PC-3 (cell line): ENCODE measurements at regions of chr12 and their contacts with region 1.

Region 1: GRCh38 chr12:92136965-92137721 is 8.5 kb downstream of the BTG1 start:
- DNase-seq: peak; percentile 91
- ATAC-seq: peak; percentile 60
- H3K4me3 ChIP-seq: peak overlapping the region; percentile 87
- H3K27ac ChIP-seq: peak overlapping the region; percentile 91
- H3K4me1 ChIP-seq: peaks cover 69% of the 10 kb centered on the region
- H3K27me3 ChIP-seq: no peaks in the 10 kb centered on the region
- CTCF ChIP-seq: no peak

Region 2: GRCh38 chr12:91561958-91562875 is 574.9 kb before region 1 on chr12:
- CTCF ChIA-PET with region 1: no interaction called
- POLR2A ChIA-PET with region 1: no interaction called
- intact Hi-C with region 1: no loop called
- DNase-seq: no peak
- ATAC-seq: no peak
- H3K4me3 ChIP-seq: no peak overlapping the region
- H3K27ac ChIP-seq: no peak overlapping the region
- H3K4me1 ChIP-seq: no peaks in the 10 kb centered on the region; the same call in 1 of the 2 replicates
- H3K27me3 ChIP-seq: no peaks in the 10 kb centered on the region
- CTCF ChIP-seq: no peak

Region 3: GRCh38 chr12:91778938-91779400 is 358.2 kb before region 1 on chr12:
- CTCF ChIA-PET with region 1: no interaction called
- POLR2A ChIA-PET with region 1: no interaction called
- intact Hi-C with region 1: loop called (anchors 2 kb)
- DNase-seq: peak; percentile 97
- ATAC-seq: peak; percentile 87
- H3K4me3 ChIP-seq: peak overlapping the region; percentile 38
- H3K27ac ChIP-seq: peak overlapping the region; percentile 99
- H3K4me1 ChIP-seq: peaks cover 47% of the 10 kb centered on the region
- H3K27me3 ChIP-seq: no peaks in the 10 kb centered on the region
- CTCF ChIP-seq: no peak

Region 4: GRCh38 chr12:91811481-91812287 is 325.5 kb before region 1 on chr12:
- CTCF ChIA-PET with region 1: interaction called, 3 read pairs
- POLR2A ChIA-PET with region 1: no interaction called
- intact Hi-C with region 1: loop called (anchors 2 kb)
- DNase-seq: peak; percentile 72
- ATAC-seq: peak; percentile 53
- H3K4me3 ChIP-seq: no peak overlapping the region
- H3K27ac ChIP-seq: no peak overlapping the region
- H3K4me1 ChIP-seq: no peaks in the 10 kb centered on the region
- H3K27me3 ChIP-seq: no peaks in the 10 kb centered on the region
- CTCF ChIP-seq: peak; percentile 93

Region 5: DNA sequence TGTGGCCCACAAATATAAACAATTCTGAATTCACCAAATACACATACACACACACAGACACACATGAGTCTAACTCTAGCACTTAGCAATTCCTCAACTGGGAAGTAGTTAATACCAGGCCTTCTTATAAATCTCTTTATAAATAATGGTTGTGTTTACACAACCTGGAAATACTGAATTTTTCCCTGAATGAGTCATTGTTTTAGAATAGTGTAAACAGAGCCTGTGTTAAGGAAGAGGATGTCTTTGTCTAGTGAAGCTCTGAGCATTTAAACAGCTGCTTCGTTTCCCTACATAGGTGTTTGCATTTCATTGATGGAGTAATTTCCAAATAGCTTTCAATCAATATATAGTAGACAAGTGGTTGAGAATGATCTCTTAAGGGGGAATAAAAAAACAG is 210.3 kb before region 1 on chr12:
- CTCF ChIA-PET with region 1: no interaction called
- POLR2A ChIA-PET with region 1: no interaction called
- intact Hi-C with region 1: loop called (anchors 1 kb)
- DNase-seq: peak; percentile 94
- ATAC-seq: peak; percentile 96
- H3K4me3 ChIP-seq: no peak overlapping the region
- H3K27ac ChIP-seq: peak overlapping the region; percentile 36; the same call in 1 of the 2 replicates
- H3K4me1 ChIP-seq: peaks cover 24% of the 10 kb centered on the region
- H3K27me3 ChIP-seq: no peaks in the 10 kb centered on the region
- CTCF ChIP-seq: no peak

Region 6: DNA sequence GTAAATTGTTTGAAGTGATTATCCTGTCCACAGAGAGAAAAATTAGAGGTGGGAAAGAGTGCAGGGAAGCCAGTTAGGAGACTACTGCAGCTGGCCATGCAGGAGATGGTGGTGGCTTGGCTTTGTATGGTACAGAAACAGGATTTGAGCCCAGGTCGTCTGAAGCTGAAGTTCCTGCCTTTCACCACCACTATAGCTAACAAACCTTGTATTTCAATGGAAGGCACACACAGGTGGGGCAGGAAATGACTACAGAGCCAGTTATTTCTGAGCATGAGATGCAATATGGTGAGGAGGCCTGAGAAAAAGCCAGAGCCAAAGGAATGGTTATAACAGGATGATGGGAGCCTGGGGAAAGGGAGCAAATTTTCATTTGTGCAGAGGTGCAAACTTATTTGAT is 95.4 kb before region 1 on chr12:
- CTCF ChIA-PET with region 1: no interaction called
- POLR2A ChIA-PET with region 1: no interaction called
- intact Hi-C with region 1: loop called (anchors 5 kb)
- DNase-seq: peak; percentile 79
- ATAC-seq: peak; percentile 93
- H3K4me3 ChIP-seq: no peak overlapping the region
- H3K27ac ChIP-seq: peak overlapping the region; percentile 41
- H3K4me1 ChIP-seq: peaks cover 23% of the 10 kb centered on the region
- H3K27me3 ChIP-seq: no peaks in the 10 kb centered on the region
- CTCF ChIP-seq: no peak

Region 7: GRCh38 chr12:92085040-92085735 is 52.0 kb before region 1 on chr12:
- CTCF ChIA-PET with region 1: no interaction called
- POLR2A ChIA-PET with region 1: interaction called, 3 read pairs
- intact Hi-C with region 1: loop called (anchors 1 kb)
- DNase-seq: no peak
- ATAC-seq: peak; percentile 7; the same call in 1 of the 2 replicates
- H3K4me3 ChIP-seq: no peak overlapping the region
- H3K27ac ChIP-seq: peak overlapping the region; percentile 61
- H3K4me1 ChIP-seq: peaks cover 44% of the 10 kb centered on the region
- H3K27me3 ChIP-seq: no peaks in the 10 kb centered on the region
- CTCF ChIP-seq: no peak

Region 8: GRCh38 chr12:92094751-92095161 is 42.4 kb before region 1 on chr12:
- CTCF ChIA-PET with region 1: no interaction called
- POLR2A ChIA-PET with region 1: no interaction called
- intact Hi-C with region 1: loop called (anchors 5 kb)
- DNase-seq: peak; percentile 77
- ATAC-seq: peak; percentile 35; the same call in 1 of the 2 replicates
- H3K4me3 ChIP-seq: no peak overlapping the region
- H3K27ac ChIP-seq: peak overlapping the region; percentile 18; the same call in 1 of the 2 replicates
- H3K4me1 ChIP-seq: peaks cover 28% of the 10 kb centered on the region
- H3K27me3 ChIP-seq: no peaks in the 10 kb centered on the region
- CTCF ChIP-seq: peak; percentile 28; the same call in 1 of the 2 replicates

Region 9: GRCh38 chr12:92114834-92115233 is 22.3 kb before region 1 on chr12:
- CTCF ChIA-PET with region 1: no interaction called
- POLR2A ChIA-PET with region 1: no interaction called
- intact Hi-C with region 1: no loop called
- DNase-seq: no peak
- ATAC-seq: no peak
- H3K4me3 ChIP-seq: no peak overlapping the region
- H3K27ac ChIP-seq: no peak overlapping the region
- H3K4me1 ChIP-seq: no peaks in the 10 kb centered on the region
- H3K27me3 ChIP-seq: no peaks in the 10 kb centered on the region
- CTCF ChIP-seq: no peak

Region 10: DNA sequence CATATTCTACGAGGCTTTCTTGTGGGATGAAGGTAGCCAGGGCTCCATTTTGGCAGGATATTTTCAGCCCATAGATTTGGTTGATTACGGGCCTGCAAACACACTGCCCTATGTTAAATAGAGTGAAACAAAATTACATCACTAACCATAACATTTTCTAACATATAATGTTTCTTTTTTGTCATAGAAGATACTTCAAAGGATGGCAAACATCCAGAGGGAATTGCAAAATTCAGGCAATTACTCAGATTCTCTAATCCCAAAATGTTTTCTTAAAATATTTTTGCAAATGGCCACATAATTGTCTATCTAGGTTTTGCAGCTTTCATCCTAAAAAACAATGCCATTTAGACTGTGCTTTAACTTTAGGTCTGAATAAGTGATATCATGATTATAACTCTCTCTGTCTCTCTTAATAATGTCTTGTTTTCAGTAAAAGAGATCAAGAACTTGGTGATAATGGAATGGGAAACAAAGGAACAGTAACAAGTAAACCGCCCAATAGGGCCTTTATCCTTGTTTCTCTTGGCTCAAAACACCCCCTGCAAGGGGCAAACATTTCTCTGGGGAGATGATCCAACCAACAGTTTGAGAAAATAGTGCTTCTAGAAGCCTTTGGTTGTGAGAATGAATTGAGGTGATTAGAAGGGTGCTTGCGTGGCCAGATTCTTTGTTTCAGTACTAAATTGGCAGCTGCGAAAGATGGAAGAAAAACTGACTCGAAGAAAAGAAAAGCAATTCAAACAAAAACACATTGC is 62.9 kb after region 1 on chr12:
- CTCF ChIA-PET with region 1: no interaction called
- POLR2A ChIA-PET with region 1: no interaction called
- intact Hi-C with region 1: no loop called
- DNase-seq: no peak
- ATAC-seq: no peak
- H3K4me3 ChIP-seq: no peak overlapping the region
- H3K27ac ChIP-seq: no peak overlapping the region
- H3K4me1 ChIP-seq: no peaks in the 10 kb centered on the region
- H3K27me3 ChIP-seq: no peaks in the 10 kb centered on the region
- CTCF ChIP-seq: no peak

Region 11: DNA sequence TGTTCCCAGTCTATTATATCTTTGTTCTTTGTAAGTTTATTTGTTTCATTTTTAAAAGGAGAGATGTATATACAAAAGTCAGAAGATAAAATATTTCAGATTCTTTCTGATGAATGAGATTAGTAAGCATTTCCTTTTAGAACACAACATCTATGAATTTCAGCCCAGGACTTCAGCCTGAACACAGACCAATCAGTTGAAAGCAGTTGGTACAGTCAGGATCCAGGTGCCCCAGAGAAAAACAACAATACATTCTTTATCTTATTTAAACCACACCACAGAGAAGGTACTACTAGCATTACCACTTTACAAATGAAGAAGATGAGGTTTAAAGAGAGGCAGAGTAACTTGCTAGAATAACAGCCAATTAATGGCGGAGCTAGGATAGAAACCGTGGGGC is 122.7 kb after region 1 on chr12:
- CTCF ChIA-PET with region 1: no interaction called
- POLR2A ChIA-PET with region 1: no interaction called
- intact Hi-C with region 1: no loop called
- DNase-seq: no peak
- ATAC-seq: no peak
- H3K4me3 ChIP-seq: no peak overlapping the region
- H3K27ac ChIP-seq: no peak overlapping the region
- H3K4me1 ChIP-seq: no peaks in the 10 kb centered on the region
- H3K27me3 ChIP-seq: no peaks in the 10 kb centered on the region
- CTCF ChIP-seq: no peak